ENCODE measurements at regions of chr19 and their contacts with region 1.

Region 1: GRCh38 chr19:57819475-57820148 is 4.9 kb upstream of the ZNF552 start:
- DNase-seq: peak; percentile 87 to 97
- H3K4me3 ChIP-seq: peak overlapping the region; percentile 82
- H3K27ac ChIP-seq: peak overlapping the region; percentile 56
- H3K4me1 ChIP-seq: peaks cover 23% of the 10 kb centered on the region
- H3K27me3 ChIP-seq: no peaks in the 10 kb centered on the region
- CTCF ChIP-seq: no peak; the same call in 1 of the 2 replicates

Region 2: DNA sequence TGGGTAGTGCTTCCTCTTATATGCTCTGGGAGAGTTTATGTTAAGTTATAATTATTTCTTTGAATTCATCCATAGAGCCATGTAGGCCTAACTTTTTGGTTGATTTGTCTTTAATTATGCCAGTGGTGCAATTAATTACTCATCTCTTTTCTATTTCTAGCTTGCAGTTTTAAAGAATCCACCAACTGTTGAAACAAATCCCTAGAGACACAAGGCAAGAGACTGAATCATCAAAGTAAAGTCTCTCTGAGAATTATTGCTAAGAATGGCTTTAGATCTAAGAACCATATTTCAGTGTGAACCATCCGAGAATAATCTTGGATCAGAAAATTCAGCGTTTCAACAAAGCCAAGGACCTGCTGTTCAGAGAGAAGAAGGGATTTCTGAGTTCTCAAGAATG is 143.7 kb before region 1 on chr19:
- CTCF ChIA-PET with region 1: no interaction called
- POLR2A ChIA-PET with region 1: interaction called, 28 read pairs
- intact Hi-C with region 1: loop called (anchors 5 kb)
- DNase-seq: no peak
- H3K4me3 ChIP-seq: no peak overlapping the region
- H3K27ac ChIP-seq: no peak overlapping the region
- H3K4me1 ChIP-seq: no peaks in the 10 kb centered on the region
- H3K27me3 ChIP-seq: no peaks in the 10 kb centered on the region
- CTCF ChIP-seq: no peak

Region 3: DNA sequence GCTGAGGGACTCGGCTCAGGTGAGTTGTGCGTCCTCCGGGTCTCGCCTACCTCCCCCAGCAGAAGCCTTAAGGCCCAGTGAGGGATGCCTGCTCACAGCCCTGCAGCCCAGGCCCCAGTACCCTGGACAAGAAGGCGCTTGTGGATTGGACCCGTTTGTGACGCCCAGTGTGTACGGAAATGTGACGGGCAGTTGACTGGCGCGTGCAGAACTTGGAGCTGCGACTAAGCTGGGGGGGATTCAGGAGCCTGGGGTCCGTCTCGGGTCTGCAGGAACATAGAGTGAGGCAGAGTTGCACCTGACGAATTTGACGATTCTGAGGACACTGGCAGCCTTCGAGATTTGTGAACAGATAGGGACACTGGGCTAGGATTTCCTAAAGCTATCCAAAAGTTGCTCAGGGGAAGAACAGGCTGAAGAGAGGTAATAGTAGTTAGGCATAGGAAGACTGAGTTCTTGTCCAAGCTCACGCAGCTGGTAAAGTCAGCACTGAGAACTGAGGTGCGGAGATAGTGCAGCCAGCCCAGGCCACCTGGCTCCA is 137.3 kb before region 1 on chr19:
- CTCF ChIA-PET with region 1: no interaction called
- POLR2A ChIA-PET with region 1: no interaction called
- intact Hi-C with region 1: loop called (anchors 5 kb)
- DNase-seq: no peak
- H3K4me3 ChIP-seq: peak overlapping the region; percentile 85
- H3K27ac ChIP-seq: no peak overlapping the region
- H3K4me1 ChIP-seq: 0 out of 2 replicates have a peak, but pooled peaks cover 7% of the 10 kb centered on the region
- H3K27me3 ChIP-seq: no peaks in the 10 kb centered on the region
- CTCF ChIP-seq: no peak

Region 4: GRCh38 chr19:57746580-57747471 is 72.8 kb before region 1 on chr19 and contains the start of gene ZNF776:
- CTCF ChIA-PET with region 1: no interaction called
- POLR2A ChIA-PET with region 1: no interaction called
- intact Hi-C with region 1: loop called (anchors 1 kb)
- DNase-seq: peak; percentile 78 to 89
- H3K4me3 ChIP-seq: peak within 1 kb of the TSS; percentile 98
- H3K27ac ChIP-seq: peak within 1 kb of the TSS; percentile 24; the same call in 1 of the 2 replicates
- H3K4me1 ChIP-seq: peaks cover 10% of the 10 kb centered on the region; the same call in 1 of the 2 replicates
- H3K27me3 ChIP-seq: no peaks in the 10 kb centered on the region
- CTCF ChIP-seq: no peak
- total RNA-seq, gene ZNF776: 16.9 and 17.8 TPM in 2 replicates

Region 5: DNA sequence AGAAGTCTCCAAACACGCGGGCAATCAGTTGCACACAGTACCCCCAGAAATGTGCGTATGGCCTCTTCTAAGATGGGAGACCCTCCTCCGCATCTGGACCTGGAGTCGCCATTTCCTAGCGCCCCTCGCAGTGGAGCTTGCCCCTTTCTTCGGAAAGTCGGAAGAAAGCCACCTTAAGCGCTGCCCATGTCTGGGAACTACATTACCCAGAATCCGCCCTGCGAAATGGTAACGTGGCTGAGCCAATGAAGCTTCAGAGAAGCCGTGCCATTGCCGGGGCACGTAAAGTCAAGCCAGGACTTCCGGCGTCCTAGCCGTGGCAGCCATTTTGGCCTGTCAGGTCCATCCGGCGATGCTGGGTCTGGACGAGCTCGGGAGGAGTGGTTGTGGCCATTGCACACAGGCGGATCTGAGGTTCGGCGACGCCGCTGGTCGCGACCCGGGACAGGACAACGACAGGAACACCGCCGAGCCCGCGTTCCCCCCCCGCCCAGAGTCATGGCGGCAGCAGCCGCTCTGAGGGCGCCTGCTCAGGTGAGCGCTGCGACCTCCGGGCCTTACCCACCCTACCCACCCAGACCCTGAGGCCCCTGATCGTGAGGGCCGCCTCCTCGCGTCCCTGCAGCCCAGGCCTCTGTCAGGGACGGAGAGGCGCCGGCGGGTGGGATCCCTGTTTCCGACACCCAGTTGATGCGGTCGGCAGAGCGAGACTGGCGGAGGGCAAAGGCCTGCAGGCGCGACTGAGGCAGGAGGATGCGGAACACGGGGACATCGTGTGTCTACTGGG is 50.1 kb before region 1 on chr19 and contains the start of gene ZNF586:
- CTCF ChIA-PET with region 1: no interaction called
- POLR2A ChIA-PET with region 1: no interaction called
- intact Hi-C with region 1: loop called (anchors 1 kb)
- DNase-seq: peak; percentile 85 to 90
- H3K4me3 ChIP-seq: peak within 1 kb of the TSS; percentile 78
- H3K27ac ChIP-seq: no peak within 1 kb of the TSS
- H3K4me1 ChIP-seq: peaks cover 7% of the 10 kb centered on the region; the same call in 1 of the 2 replicates
- H3K27me3 ChIP-seq: no peaks in the 10 kb centered on the region
- CTCF ChIP-seq: no peak
- total RNA-seq, gene ZNF586: 19.0 and 21.3 TPM in 2 replicates

Region 6: GRCh38 chr19:57803594-57804325 is 15.9 kb before region 1 on chr19:
- CTCF ChIA-PET with region 1: interaction called, 5 read pairs
- POLR2A ChIA-PET with region 1: interaction called, 28 read pairs
- intact Hi-C with region 1: loop called (anchors 1 kb)
- DNase-seq: peak; percentile 53 to 64
- H3K4me3 ChIP-seq: peak overlapping the region; percentile 61
- H3K27ac ChIP-seq: peak overlapping the region; percentile 61
- H3K4me1 ChIP-seq: peaks cover 30% of the 10 kb centered on the region
- H3K27me3 ChIP-seq: no peaks in the 10 kb centered on the region
- CTCF ChIP-seq: no peak

Region 7: GRCh38 chr19:57914531-57914930 is 94.9 kb after region 1 on chr19:
- CTCF ChIA-PET with region 1: no interaction called
- POLR2A ChIA-PET with region 1: interaction called, 25 read pairs
- intact Hi-C with region 1: no loop called
- DNase-seq: no peak
- H3K4me3 ChIP-seq: peak overlapping the region; percentile 63; the same call in 1 of the 2 replicates
- H3K27ac ChIP-seq: no peak overlapping the region
- H3K4me1 ChIP-seq: 0 out of 2 replicates have a peak, but pooled peaks cover 7% of the 10 kb centered on the region
- H3K27me3 ChIP-seq: no peaks in the 10 kb centered on the region
- CTCF ChIP-seq: no peak

Measured in PC-9 (cell line).